HAP-1 (cell line): ENCODE measurements at regions of chr13 and their contacts with region 1.

Region 1: GRCh38 chr13:41384755-41385503 is 72.4 kb upstream of the RGCC start:
- DNase-seq: peak in 1 of 2 experiments; percentile 10
- H3K4me3 ChIP-seq: no peak overlapping the region
- H3K4me1 ChIP-seq: no peaks in the 10 kb centered on the region
- H3K27me3 ChIP-seq: peaks cover 5% of the 10 kb centered on the region; the same call in 1 of the 2 replicates

Region 2: GRCh38 chr13:41649659-41650058 is 264.7 kb after region 1 on chr13:
- in situ Hi-C with region 1: loop called (anchors 10 kb)
- DNase-seq: peak in 1 of 2 experiments; percentile 32
- H3K4me3 ChIP-seq: no peak overlapping the region
- H3K4me1 ChIP-seq: peaks cover 18% of the 10 kb centered on the region
- H3K27me3 ChIP-seq: no peaks in the 10 kb centered on the region

Region 3: DNA sequence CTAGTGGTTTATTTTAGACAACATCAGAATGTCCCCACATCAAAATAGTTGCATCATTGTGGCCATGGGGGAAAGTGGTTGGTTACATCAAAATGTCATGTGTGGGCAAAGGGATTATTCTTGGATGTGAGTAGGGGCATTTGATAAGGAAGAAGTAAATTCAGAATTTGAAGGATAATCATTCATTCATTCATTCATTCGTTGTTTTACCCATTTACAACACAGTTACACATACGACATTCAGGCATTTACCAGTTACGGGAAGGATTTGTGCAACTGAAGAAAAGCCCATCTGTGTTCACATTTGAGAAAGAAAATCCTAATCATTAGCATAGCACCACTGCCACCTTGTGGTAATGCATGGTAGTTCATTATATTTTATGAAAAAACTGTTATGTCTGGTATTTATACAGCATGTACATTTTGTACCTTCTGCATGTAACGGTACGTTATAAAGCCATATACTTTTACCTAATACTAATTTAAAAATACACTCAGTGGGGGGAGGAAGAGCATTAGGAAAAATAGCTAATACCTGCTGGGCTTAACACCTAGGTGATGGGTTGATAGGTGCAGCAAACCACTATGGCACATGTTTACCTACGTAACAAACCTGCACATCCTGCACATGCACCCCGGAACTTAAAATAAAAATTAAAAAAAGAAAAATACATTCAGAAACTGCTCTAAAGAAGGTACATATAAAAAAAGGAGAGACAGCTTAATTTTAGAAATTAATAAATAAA is 725.7 kb after region 1 on chr13:
- in situ Hi-C with region 1: loop called (anchors 25 kb)
- DNase-seq: peak; percentile 40 to 68
- H3K4me3 ChIP-seq: no peak overlapping the region
- H3K4me1 ChIP-seq: peaks cover 2% of the 10 kb centered on the region; the same call in 1 of the 2 replicates
- H3K27me3 ChIP-seq: no peaks in the 10 kb centered on the region